B cell (primary cell): ENCODE measurements at regions of chr6 and their contacts with region 1.

Region 1: GRCh38 chr6:46221222-46221793 is 50.5 kb upstream of the ENPP5 start:
- DNase-seq: peak; percentile 68
- ATAC-seq: peak; percentile 53
- H3K4me3 ChIP-seq: no peak overlapping the region
- H3K4me3 Mint-ChIP-seq: no peak overlapping the region
- H3K27ac ChIP-seq: peak overlapping the region in 1 of 2 donors; percentile 43
- H3K27ac Mint-ChIP-seq: peak overlapping the region; percentile 93
- H3K4me1 ChIP-seq: peaks cover 23 to 33% of the 10 kb centered on the region in 2 donors
- H3K4me1 Mint-ChIP-seq: peaks cover 46% of the 10 kb centered on the region
- H3K27me3 ChIP-seq: no peaks in the 10 kb centered on the region
- H3K27me3 Mint-ChIP-seq: no peaks in the 10 kb centered on the region
- CTCF ChIP-seq: peak; percentile 87

Region 2: DNA sequence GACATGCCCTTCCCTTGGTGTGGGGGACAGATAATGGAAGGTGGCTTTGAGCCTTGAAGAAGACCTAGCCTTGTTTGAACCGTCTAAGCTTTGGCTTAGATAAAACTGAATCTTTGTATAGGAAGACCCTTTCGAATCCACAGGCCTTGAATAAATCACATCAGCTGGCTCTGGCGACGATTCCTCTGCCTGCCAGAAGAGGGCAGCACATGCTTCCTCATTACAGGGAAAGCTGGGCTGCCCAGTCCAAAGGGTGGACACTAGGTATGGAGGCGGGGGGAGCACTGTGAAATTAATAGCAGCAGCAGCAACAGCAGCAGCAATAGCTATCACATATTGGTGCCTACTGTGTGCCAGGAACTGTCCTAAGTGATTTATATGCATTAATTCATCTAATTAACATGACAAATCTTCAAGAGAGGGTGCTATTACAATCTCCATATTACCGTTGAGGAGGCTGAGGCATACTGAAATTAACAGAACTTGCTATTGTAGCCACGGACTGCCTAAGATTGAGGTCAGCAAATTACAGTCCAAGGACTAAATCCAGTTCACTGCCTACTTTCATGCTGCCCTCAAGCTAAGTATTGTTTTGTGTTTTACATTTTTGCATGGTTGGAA is 290.8 kb before region 1 on chr6:
- CTCF ChIA-PET with region 1: interaction called, 3 read pairs
- POLR2A ChIA-PET with region 1: no interaction called
- intact Hi-C with region 1: loop called (anchors 2 kb)
- DNase-seq: peak; percentile 63
- ATAC-seq: no peak
- H3K4me3 ChIP-seq: no peak overlapping the region
- H3K4me3 Mint-ChIP-seq: no peak overlapping the region
- H3K27ac ChIP-seq: no peak overlapping the region
- H3K27ac Mint-ChIP-seq: no peak overlapping the region
- H3K4me1 ChIP-seq: no peaks in the 10 kb centered on the region
- H3K4me1 Mint-ChIP-seq: no peaks in the 10 kb centered on the region
- H3K27me3 ChIP-seq: no peaks in the 10 kb centered on the region
- H3K27me3 Mint-ChIP-seq: peaks cover 4% of the 10 kb centered on the region
- CTCF ChIP-seq: peak; percentile 99

Region 3: GRCh38 chr6:46072866-46073265 is 148.4 kb before region 1 on chr6:
- CTCF ChIA-PET with region 1: no interaction called
- POLR2A ChIA-PET with region 1: no interaction called
- intact Hi-C with region 1: no loop called
- DNase-seq: no peak
- ATAC-seq: no peak
- H3K4me3 ChIP-seq: no peak overlapping the region
- H3K4me3 Mint-ChIP-seq: no peak overlapping the region
- H3K27ac ChIP-seq: no peak overlapping the region
- H3K27ac Mint-ChIP-seq: no peak overlapping the region
- H3K4me1 ChIP-seq: no peaks in the 10 kb centered on the region
- H3K4me1 Mint-ChIP-seq: no peaks in the 10 kb centered on the region
- H3K27me3 ChIP-seq: no peaks in the 10 kb centered on the region
- H3K27me3 Mint-ChIP-seq: peaks cover 8% of the 10 kb centered on the region
- CTCF ChIP-seq: no peak

Region 4: GRCh38 chr6:46376562-46377061 is 155.3 kb after region 1 on chr6:
- CTCF ChIA-PET with region 1: interaction called, 15 read pairs
- POLR2A ChIA-PET with region 1: no interaction called
- intact Hi-C with region 1: loop called (anchors 1 kb)
- DNase-seq: peak; percentile 73
- ATAC-seq: peak; percentile 89
- H3K4me3 ChIP-seq: peak overlapping the region in 2 of 5 experiments; percentile 28 to 36
- H3K4me3 Mint-ChIP-seq: peak overlapping the region; percentile 75
- H3K27ac ChIP-seq: peak overlapping the region; percentile 62 to 69
- H3K27ac Mint-ChIP-seq: peak overlapping the region; percentile 89
- H3K4me1 ChIP-seq: peaks cover 41 to 42% of the 10 kb centered on the region in 2 donors
- H3K4me1 Mint-ChIP-seq: peaks cover 75% of the 10 kb centered on the region
- H3K27me3 ChIP-seq: no peaks in the 10 kb centered on the region
- H3K27me3 Mint-ChIP-seq: no peaks in the 10 kb centered on the region
- CTCF ChIP-seq: no peak

Region 5: GRCh38 chr6:46491628-46492547 is 270.6 kb after region 1 on chr6:
- CTCF ChIA-PET with region 1: no interaction called
- POLR2A ChIA-PET with region 1: no interaction called
- intact Hi-C with region 1: loop called (anchors 2 kb)
- DNase-seq: peak; percentile 34
- ATAC-seq: peak; percentile 43
- H3K4me3 ChIP-seq: peak overlapping the region in 4 of 5 experiments; percentile 45 to 77 (median 64)
- H3K4me3 Mint-ChIP-seq: peak overlapping the region; percentile 66
- H3K27ac ChIP-seq: no peak overlapping the region
- H3K27ac Mint-ChIP-seq: no peak overlapping the region
- H3K4me1 ChIP-seq: peaks cover 8 to 14% of the 10 kb centered on the region in 2 donors
- H3K4me1 Mint-ChIP-seq: peaks cover 11% of the 10 kb centered on the region
- H3K27me3 ChIP-seq: peaks cover 0 to 41% (median 31%) of the 10 kb centered on the region in 4 experiments
- H3K27me3 Mint-ChIP-seq: peaks cover 70% of the 10 kb centered on the region
- CTCF ChIP-seq: peak; percentile 23

Region 6: GRCh38 chr6:46781478-46782378 is 560.4 kb after region 1 on chr6:
- CTCF ChIA-PET with region 1: no interaction called
- POLR2A ChIA-PET with region 1: no interaction called
- intact Hi-C with region 1: loop called (anchors 2 kb)
- DNase-seq: peak; percentile 14
- ATAC-seq: no peak
- H3K4me3 ChIP-seq: no peak overlapping the region
- H3K4me3 Mint-ChIP-seq: no peak overlapping the region
- H3K27ac ChIP-seq: no peak overlapping the region
- H3K27ac Mint-ChIP-seq: no peak overlapping the region
- H3K4me1 ChIP-seq: no peaks in the 10 kb centered on the region
- H3K4me1 Mint-ChIP-seq: no peaks in the 10 kb centered on the region
- H3K27me3 ChIP-seq: no peaks in the 10 kb centered on the region
- H3K27me3 Mint-ChIP-seq: peaks cover 10% of the 10 kb centered on the region
- CTCF ChIP-seq: peak; percentile 48